Prostate gland (tissue), 2 donors: ENCODE measurements at regions of chr16 and their contacts with region 1.

Region 1: DNA sequence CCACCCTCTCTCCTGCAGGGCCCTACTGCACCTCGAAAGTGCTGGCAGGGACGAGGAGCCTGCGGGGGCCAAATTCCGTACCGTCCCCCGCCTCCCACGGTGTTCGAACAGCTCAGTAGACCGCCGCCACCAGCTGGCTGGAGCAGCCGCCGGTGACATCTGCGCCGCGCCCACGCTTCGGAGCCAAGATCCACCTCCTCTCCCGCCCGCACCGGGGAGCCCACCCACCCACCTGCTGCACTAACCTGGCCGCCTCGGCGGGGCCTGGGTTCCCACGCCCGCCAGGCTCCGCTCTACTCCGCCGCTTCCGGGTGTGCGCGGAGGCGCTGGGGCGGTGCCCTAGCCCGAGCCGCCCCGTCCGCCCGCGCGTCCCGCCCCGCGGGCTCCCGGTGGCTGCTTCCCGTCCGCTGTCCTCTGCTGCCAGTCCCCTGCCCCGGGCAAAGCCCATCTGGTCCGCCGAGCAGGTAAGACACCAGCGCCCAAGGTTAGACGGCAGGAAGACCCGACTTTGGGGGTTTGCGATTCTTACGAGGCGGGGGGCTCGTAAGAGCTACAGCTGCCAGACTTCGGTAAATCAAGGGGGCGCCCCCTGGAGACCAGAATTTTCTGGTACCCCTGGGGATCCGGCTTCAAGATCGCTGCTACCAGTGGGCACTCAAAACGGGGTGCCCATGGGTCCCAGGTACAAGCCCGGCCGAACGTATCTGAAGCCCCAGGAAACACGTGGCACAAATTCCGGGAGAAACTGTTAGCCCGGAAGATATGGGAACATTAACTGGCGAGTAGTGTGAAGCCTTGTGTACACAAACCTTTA is at the starts of genes FBXL8 and TRADD:
- DNase-seq: peak; percentile 73
- H3K4me3 ChIP-seq: peak within 1 kb of the TSS; percentile 92 to 97
- H3K27ac ChIP-seq: peak within 1 kb of the TSS; percentile 91 to 94
- H3K4me1 ChIP-seq: peaks cover 35% of the 10 kb centered on the region
- H3K27me3 ChIP-seq: no peaks in the 10 kb centered on the region
- CTCF ChIP-seq: peak in 3 of 4 experiments; percentile 30 to 52 (median 32)
- POLR2A ChIP-seq: peak; percentile 90
- total RNA-seq, gene FBXL8: 67.9 to 124 TPM
- total RNA-seq, gene TRADD: 33.3 to 56.3 TPM

Region 2: GRCh38 chr16:66894948-66895688 is 264.7 kb before region 1 on chr16:
- intact Hi-C with region 1: loop called (anchors 5 kb)
- DNase-seq: peak; percentile 34
- H3K4me3 ChIP-seq: no peak overlapping the region
- H3K27ac ChIP-seq: no peak overlapping the region
- H3K4me1 ChIP-seq: no peaks in the 10 kb centered on the region
- H3K27me3 ChIP-seq: no peaks in the 10 kb centered on the region
- CTCF ChIP-seq: peak; percentile 39 to 74 (median 63)
- POLR2A ChIP-seq: no peak

Region 3: DNA sequence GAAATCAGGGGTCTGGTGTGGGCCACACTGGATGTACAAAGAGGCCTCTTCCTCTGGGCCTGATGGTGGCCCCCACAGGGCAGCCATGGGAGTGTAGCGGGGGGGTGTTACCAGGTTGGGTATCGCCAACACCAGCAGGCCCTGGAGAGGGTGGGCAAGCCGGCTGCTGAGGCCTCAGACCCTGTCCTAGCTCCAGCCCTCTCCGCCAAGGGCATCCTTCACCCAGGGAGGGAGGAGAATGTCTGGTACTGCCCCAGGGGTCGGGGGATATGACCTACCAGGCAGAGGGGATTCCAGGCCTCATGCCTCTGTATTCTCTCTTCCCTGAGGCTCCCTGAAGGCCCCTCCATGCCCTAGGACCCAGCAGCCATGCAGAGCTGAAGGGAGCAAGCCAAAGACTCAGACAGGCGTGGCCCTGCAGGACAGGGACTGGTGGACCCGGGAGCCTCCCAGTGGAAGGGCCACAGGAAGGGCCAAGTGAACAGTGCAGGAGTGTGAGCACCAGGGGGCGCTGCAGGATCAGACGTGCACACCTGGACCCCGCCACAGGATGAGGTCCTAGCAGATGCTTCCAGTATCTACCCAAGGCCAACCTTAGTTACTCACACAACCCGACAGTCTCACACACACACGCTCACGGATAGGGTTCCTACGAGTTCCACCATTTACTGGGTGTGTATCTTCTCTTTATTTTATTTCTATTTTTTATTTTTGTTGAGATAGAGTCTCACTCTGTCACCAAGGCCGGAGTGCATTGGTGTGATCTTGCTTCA is 182.3 kb before region 1 on chr16:
- intact Hi-C with region 1: loop called (anchors 1 kb)
- DNase-seq: peak; percentile 86
- H3K4me3 ChIP-seq: no peak overlapping the region
- H3K27ac ChIP-seq: no peak overlapping the region
- H3K4me1 ChIP-seq: no peaks in the 10 kb centered on the region
- H3K27me3 ChIP-seq: no peaks in the 10 kb centered on the region
- CTCF ChIP-seq: peak; percentile 94 to 98 (median 96)
- POLR2A ChIP-seq: no peak

Region 4: GRCh38 chr16:67028555-67029248 is 131.1 kb before region 1 on chr16 and contains the start of gene CBFB:
- intact Hi-C with region 1: loop called (anchors 5 kb)
- DNase-seq: peak; percentile 90
- H3K4me3 ChIP-seq: peak within 1 kb of the TSS; percentile 73 to 95
- H3K27ac ChIP-seq: peak within 1 kb of the TSS; percentile 93 to 96
- H3K4me1 ChIP-seq: no peaks in the 10 kb centered on the region
- H3K27me3 ChIP-seq: no peaks in the 10 kb centered on the region
- CTCF ChIP-seq: peak in 2 of 4 experiments; percentile 20 to 40
- POLR2A ChIP-seq: peak; percentile 74
- total RNA-seq, gene CBFB: 27.0 to 46.2 TPM

Region 5: GRCh38 chr16:67613808-67614207 is 454.0 kb after region 1 on chr16:
- intact Hi-C with region 1: no loop called
- DNase-seq: no peak
- H3K4me3 ChIP-seq: no peak overlapping the region
- H3K27ac ChIP-seq: no peak overlapping the region
- H3K4me1 ChIP-seq: no peaks in the 10 kb centered on the region
- H3K27me3 ChIP-seq: no peaks in the 10 kb centered on the region
- CTCF ChIP-seq: no peak
- POLR2A ChIP-seq: no peak